OCI-LY7 (cell line): ENCODE measurements at regions of chr1 and their contacts with region 1.

Region 1: DNA sequence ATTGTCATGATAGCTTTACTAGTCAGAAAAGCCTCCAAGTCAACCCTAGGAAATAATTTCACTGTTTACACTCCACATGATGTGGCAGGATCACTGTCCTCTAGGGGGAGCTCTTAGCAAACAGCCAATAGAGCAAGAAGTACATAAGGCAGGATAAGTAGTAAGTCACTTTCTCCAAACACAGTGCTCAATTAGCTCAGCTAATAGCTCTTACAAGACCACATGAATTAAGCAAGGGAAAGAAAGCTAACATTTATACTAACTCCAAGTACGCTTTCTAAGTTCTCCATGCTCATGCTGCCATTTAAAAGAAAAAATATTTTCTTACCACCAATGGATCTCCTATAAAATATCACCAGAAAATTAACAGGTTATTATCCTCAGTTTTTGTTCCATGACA is 66.9 kb upstream of the LRIF1 start:
- DNase-seq: peak; percentile 83
- H3K4me3 ChIP-seq: no peak overlapping the region
- H3K27ac ChIP-seq: no peak overlapping the region
- H3K4me1 ChIP-seq: no peaks in the 10 kb centered on the region
- CTCF ChIP-seq: peak; percentile 98

Region 2: GRCh38 chr1:110811529-110811928 is 219.1 kb before region 1 on chr1:
- CTCF ChIA-PET with region 1: no interaction called
- POLR2A ChIA-PET with region 1: no interaction called
- intact Hi-C with region 1: no loop called
- DNase-seq: no peak
- H3K4me3 ChIP-seq: no peak overlapping the region
- H3K27ac ChIP-seq: no peak overlapping the region
- H3K4me1 ChIP-seq: peaks cover 4% of the 10 kb centered on the region
- CTCF ChIP-seq: no peak

Region 3: GRCh38 chr1:111334169-111334568 is 303.6 kb after region 1 on chr1:
- CTCF ChIA-PET with region 1: no interaction called
- POLR2A ChIA-PET with region 1: no interaction called
- intact Hi-C with region 1: loop called (anchors 2 kb)
- DNase-seq: peak; percentile 74
- H3K4me3 ChIP-seq: no peak overlapping the region
- H3K27ac ChIP-seq: no peak overlapping the region
- H3K4me1 ChIP-seq: no peaks in the 10 kb centered on the region
- CTCF ChIP-seq: peak; percentile 95

Region 4: GRCh38 chr1:111399792-111400610 is 369.4 kb after region 1 on chr1:
- CTCF ChIA-PET with region 1: no interaction called
- POLR2A ChIA-PET with region 1: no interaction called
- intact Hi-C with region 1: loop called (anchors 5 kb)
- DNase-seq: peak; percentile 67
- H3K4me3 ChIP-seq: no peak overlapping the region
- H3K27ac ChIP-seq: no peak overlapping the region
- H3K4me1 ChIP-seq: peaks cover 25% of the 10 kb centered on the region
- CTCF ChIP-seq: peak; percentile 86